ENCODE measurements at regions of chr1 and their contacts with region 1.

Region 1: DNA sequence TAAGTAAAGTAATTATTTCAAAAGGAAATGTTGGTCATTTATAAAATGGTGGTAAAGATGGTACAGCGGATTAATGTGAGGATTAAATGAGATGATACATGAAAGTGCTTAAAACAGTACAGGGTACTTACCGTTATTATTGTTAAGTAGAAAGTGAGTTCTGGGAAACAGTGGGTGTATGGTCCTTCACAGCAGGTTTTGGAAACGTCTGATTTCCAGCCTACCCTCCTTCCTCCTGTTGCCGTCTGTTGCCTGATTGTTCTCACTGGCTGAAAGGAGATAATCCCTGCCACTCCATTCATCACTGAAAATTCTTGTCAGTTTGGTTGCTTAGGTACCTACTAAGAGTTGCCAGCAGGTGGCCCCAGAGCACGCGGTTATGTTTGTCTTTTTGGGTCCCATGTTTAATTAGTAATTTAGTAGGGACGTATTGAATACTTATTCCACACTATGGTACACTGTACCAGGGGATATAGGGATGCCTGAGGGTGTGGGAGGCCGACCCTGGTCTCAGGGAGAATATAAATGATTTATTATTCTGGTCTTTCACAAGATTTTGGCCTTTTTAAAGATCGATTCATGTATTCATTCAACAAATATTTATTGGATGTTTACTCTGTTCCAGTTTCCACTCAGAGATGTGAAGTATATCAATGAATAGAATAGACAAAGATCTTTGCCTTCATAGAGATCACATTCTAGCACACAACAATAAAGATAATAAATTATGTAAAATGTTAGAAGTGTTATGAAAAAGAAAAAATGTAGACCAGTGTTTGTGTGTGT is 30.8 kb upstream of the RPTN start:
- DNase-seq: peak; percentile 70 to 83
- ATAC-seq: peak; percentile 62 to 79
- H3K4me3 ChIP-seq: peak overlapping the region; percentile 80
- H3K27ac ChIP-seq: peak overlapping the region; percentile 88 to 89
- H3K4me1 ChIP-seq: peaks cover 14% of the 10 kb centered on the region
- CTCF ChIP-seq: peak; percentile 89
- EP300 ChIP-seq: no peak
- POLR2A ChIP-seq: no peak
- RAD21 ChIP-seq: peak; percentile 82 to 85

Region 2: GRCh38 chr1:151924679-151925587 is 264.9 kb before region 1 on chr1:
- CTCF ChIA-PET with region 1: no interaction called
- POLR2A ChIA-PET with region 1: no interaction called
- DNase-seq: no peak
- ATAC-seq: no peak
- H3K4me3 ChIP-seq: no peak overlapping the region
- H3K27ac ChIP-seq: no peak overlapping the region
- H3K4me1 ChIP-seq: no peaks in the 10 kb centered on the region
- CTCF ChIP-seq: no peak
- EP300 ChIP-seq: no peak
- POLR2A ChIP-seq: no peak
- RAD21 ChIP-seq: no peak

Region 3: GRCh38 chr1:151968058-151968457 is 221.8 kb before region 1 on chr1:
- CTCF ChIA-PET with region 1: interaction called, 13 read pairs
- POLR2A ChIA-PET with region 1: no interaction called
- DNase-seq: peak; percentile 52 to 74
- ATAC-seq: peak; percentile 79 to 84
- H3K4me3 ChIP-seq: no peak overlapping the region
- H3K27ac ChIP-seq: peak overlapping the region; percentile 77 to 89
- H3K4me1 ChIP-seq: peaks cover 49% of the 10 kb centered on the region
- CTCF ChIP-seq: peak; percentile 92
- EP300 ChIP-seq: no peak
- POLR2A ChIP-seq: no peak
- RAD21 ChIP-seq: peak; percentile 97 to 99

Region 4: GRCh38 chr1:152061952-152062351 is 127.9 kb before region 1 on chr1:
- CTCF ChIA-PET with region 1: interaction called, 231 read pairs
- POLR2A ChIA-PET with region 1: no interaction called
- DNase-seq: no peak
- ATAC-seq: no peak
- H3K4me3 ChIP-seq: no peak overlapping the region
- H3K27ac ChIP-seq: no peak overlapping the region
- H3K4me1 ChIP-seq: no peaks in the 10 kb centered on the region
- CTCF ChIP-seq: no peak
- EP300 ChIP-seq: no peak
- POLR2A ChIP-seq: no peak
- RAD21 ChIP-seq: no peak

Region 5: GRCh38 chr1:152110860-152111514 is 78.9 kb before region 1 on chr1:
- CTCF ChIA-PET with region 1: interaction called, 89 read pairs
- POLR2A ChIA-PET with region 1: interaction called, 6 read pairs
- DNase-seq: peak; percentile 24 to 72
- ATAC-seq: peak; percentile 45 to 72
- H3K4me3 ChIP-seq: peak overlapping the region; percentile 49
- H3K27ac ChIP-seq: peak overlapping the region in 1 of 2 experiments; percentile 67; a peak in 3 of 6 replicates
- H3K4me1 ChIP-seq: peaks cover 28% of the 10 kb centered on the region
- CTCF ChIP-seq: no peak
- EP300 ChIP-seq: no peak
- POLR2A ChIP-seq: no peak
- RAD21 ChIP-seq: no peak

Region 6: GRCh38 chr1:152141974-152142584 is 47.8 kb before region 1 on chr1:
- CTCF ChIA-PET with region 1: interaction called, 357 read pairs
- POLR2A ChIA-PET with region 1: no interaction called
- DNase-seq: peak; percentile 38 to 78
- ATAC-seq: peak; percentile 92 to 94
- H3K4me3 ChIP-seq: no peak overlapping the region
- H3K27ac ChIP-seq: no peak overlapping the region
- H3K4me1 ChIP-seq: no peaks in the 10 kb centered on the region
- CTCF ChIP-seq: peak; percentile 98
- EP300 ChIP-seq: no peak
- POLR2A ChIP-seq: no peak
- RAD21 ChIP-seq: peak; percentile 96 to 97

Region 7: DNA sequence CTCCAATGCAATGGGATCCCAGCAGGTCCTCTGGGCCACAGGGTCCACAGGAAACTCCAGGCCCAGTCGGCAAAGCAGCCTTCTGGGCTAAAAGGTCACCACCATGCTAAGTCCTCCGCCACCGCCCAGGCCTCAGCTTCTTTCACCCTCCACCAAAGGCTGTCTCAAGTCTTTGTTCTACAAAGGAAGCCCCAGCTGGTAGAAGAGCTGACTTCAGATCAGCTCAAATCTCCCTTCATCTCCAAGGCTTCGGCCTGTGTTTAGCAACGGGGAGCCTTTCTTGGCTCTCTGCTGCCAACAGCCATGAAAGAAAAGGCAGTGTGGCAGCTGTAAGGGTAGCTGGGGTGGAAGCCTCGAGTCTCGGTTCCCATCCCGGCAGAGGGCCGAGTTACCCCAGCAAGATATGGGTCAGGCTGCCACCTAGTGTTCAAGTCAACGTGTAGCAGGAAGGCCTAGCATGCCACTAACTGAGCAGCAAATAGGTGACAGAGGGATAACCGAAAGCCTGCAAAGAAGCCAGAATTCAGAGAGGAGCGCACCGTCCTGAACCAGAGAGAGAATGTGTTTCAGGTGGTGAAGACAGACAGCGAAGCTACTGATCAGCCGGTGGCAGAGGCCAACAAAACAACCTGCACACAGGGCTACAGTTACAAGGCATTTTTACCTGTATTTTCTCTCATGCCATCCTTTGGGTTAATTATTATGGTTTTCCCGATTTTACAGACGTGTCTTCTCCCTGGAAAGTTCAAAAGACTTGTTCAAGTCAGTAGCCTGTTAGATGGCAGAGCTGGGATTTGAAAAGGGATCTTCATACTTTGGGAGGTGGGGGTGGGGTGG is 251.0 kb after region 1 on chr1:
- CTCF ChIA-PET with region 1: interaction called, 19 read pairs
- POLR2A ChIA-PET with region 1: no interaction called
- DNase-seq: peak; percentile 77 to 89
- ATAC-seq: peak; percentile 97 to 99
- H3K4me3 ChIP-seq: no peak overlapping the region
- H3K27ac ChIP-seq: no peak overlapping the region
- H3K4me1 ChIP-seq: no peaks in the 10 kb centered on the region
- CTCF ChIP-seq: peak; percentile 85
- EP300 ChIP-seq: no peak
- POLR2A ChIP-seq: no peak
- RAD21 ChIP-seq: peak; percentile 80

Region 8: GRCh38 chr1:152533327-152533938 is 343.6 kb after region 1 on chr1:
- CTCF ChIA-PET with region 1: interaction called, 12 read pairs
- POLR2A ChIA-PET with region 1: no interaction called
- DNase-seq: peak; percentile 33 to 76
- ATAC-seq: peak; percentile 81 to 92; a peak in 5 of 6 replicates
- H3K4me3 ChIP-seq: no peak overlapping the region
- H3K27ac ChIP-seq: no peak overlapping the region
- H3K4me1 ChIP-seq: no peaks in the 10 kb centered on the region
- CTCF ChIP-seq: peak; percentile 93
- EP300 ChIP-seq: no peak
- POLR2A ChIP-seq: no peak
- RAD21 ChIP-seq: peak; percentile 93 to 96

Region 9: GRCh38 chr1:152745289-152745704 is 555.4 kb after region 1 on chr1:
- CTCF ChIA-PET with region 1: no interaction called
- POLR2A ChIA-PET with region 1: no interaction called
- DNase-seq: peak in 1 of 2 experiments; percentile 31
- ATAC-seq: peak; percentile 62 to 75; a peak in 4 of 6 replicates
- H3K4me3 ChIP-seq: peak overlapping the region; percentile 18; the same call in 1 of the 3 replicates
- H3K27ac ChIP-seq: no peak overlapping the region
- H3K4me1 ChIP-seq: no peaks in the 10 kb centered on the region
- CTCF ChIP-seq: peak; percentile 35; the same call in 2 of the 3 replicates
- EP300 ChIP-seq: no peak
- POLR2A ChIP-seq: no peak
- RAD21 ChIP-seq: peak in 1 of 2 experiments; percentile 16; a peak in 2 of 5 replicates

Region 10: DNA sequence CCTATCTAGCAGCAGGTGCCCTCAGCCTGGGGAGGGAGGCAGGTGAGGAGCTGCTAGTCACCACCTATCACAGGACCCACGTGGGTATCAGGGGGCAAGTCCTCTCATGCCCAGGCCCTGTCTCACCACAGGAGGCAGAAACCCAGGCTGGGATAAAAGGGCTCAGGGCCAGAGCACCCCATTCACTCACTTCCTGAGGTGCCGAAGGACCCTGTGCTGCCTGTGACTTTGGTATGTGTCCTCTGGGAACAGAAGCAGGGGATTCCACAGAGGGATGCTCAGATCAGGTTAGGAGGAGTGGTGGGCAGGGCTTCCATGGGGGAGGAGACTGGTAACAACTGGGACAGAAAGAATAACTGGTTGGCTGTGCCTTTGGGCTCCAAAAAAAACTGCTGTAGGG is 596.2 kb after region 1 on chr1 and contains the start of gene LCE1E:
- CTCF ChIA-PET with region 1: no interaction called
- POLR2A ChIA-PET with region 1: no interaction called
- DNase-seq: no peak
- ATAC-seq: peak in 1 of 2 experiments; percentile 56; a peak in 1 of 6 replicates
- H3K4me3 ChIP-seq: no peak within 1 kb of the TSS
- H3K27ac ChIP-seq: no peak within 1 kb of the TSS
- H3K4me1 ChIP-seq: no peaks in the 10 kb centered on the region
- CTCF ChIP-seq: no peak
- EP300 ChIP-seq: no peak
- POLR2A ChIP-seq: no peak
- RAD21 ChIP-seq: no peak
- polyA plus RNA-seq, gene LCE1E: not detected in 2 replicates

Measured in A549 (cell line).